ENCODE measurements at regions of chr3 and their contacts with region 1.

Region 1: GRCh38 chr3:140736863-140737460 is 59.1 kb downstream of the TRIM42 start:
- DNase-seq: peak; percentile 36
- H3K4me3 ChIP-seq: no peak overlapping the region
- H3K27ac ChIP-seq: no peak overlapping the region
- H3K4me1 ChIP-seq: no peaks in the 10 kb centered on the region
- H3K27me3 ChIP-seq: peaks cover 13% of the 10 kb centered on the region
- CTCF ChIP-seq: peak; percentile 47 to 64

Region 2: DNA sequence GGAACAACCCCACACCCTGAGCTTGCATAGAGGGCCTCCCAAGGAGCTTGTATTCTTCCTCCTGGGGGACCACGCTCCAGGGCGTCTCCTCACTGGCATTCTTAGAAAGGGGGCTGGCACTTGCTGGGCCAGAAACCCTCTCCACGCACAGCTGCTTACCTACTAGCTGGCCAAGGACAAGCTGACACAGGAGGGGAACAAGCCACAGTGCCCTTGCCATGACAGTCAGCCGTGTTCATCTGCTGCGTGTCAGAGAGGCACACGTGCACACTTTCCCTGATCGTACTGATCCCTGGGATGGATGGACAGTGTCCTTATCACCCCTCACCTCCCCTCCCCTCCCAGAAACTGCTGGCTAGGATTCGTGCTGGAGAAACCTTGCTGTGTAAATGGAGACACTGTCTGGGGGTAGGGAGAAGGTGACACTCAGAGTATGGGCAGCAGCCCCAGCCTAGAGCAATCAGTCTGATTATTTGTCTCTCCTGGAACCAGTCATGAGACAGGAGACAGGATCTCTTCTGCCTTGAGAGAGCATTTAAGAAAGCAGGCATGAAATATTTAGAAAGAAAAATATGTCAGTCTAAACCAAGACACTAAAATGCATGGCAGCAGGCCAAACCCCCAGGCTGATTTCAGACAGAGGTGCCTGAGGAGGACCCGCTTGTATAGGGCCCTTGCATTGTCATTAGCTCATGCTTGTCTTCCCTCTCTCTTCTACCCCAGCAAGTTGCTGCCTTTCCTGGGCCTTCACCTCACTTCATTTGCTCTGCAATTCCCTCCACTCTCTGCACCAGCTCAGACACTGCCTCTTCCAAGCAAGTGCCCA is 370.9 kb before region 1 on chr3:
- CTCF ChIA-PET with region 1: no interaction called
- dilution Hi-C with region 1: no loop called
- in situ Hi-C with region 1: no loop called
- intact Hi-C with region 1: loop called (anchors 5 kb)
- DNase-seq: no peak
- H3K4me3 ChIP-seq: no peak overlapping the region
- H3K27ac ChIP-seq: no peak overlapping the region
- H3K4me1 ChIP-seq: no peaks in the 10 kb centered on the region
- H3K27me3 ChIP-seq: no peaks in the 10 kb centered on the region
- CTCF ChIP-seq: no peak

Region 3: DNA sequence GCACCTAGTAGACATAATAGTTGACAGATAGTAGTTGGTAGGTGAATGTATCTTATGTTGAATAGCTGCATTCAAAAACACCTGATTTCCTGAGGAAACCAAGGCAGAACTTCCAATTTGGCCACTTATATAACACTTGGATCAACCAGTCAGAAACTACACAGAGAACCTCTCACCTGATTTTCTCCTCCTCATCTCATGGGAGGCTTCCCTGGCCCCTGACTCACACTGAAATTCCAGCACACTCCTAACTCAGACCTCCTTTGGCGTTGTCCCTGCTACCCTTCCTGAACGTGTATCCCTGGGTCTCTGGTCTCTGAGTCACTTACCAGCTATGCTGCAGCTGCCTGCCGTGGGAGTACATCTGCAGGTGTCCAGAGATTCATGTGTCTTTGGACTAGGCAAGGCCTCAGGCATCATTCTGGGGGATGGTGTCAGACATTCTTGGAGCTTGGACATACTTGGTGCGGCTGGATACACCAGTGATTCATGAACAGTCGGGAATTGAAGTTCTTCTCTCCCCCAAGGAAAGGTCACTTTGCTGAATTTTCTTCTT is 207.9 kb before region 1 on chr3:
- CTCF ChIA-PET with region 1: no interaction called
- dilution Hi-C with region 1: no loop called
- in situ Hi-C with region 1: no loop called
- intact Hi-C with region 1: no loop called
- DNase-seq: peak; percentile 99
- H3K4me3 ChIP-seq: no peak overlapping the region
- H3K27ac ChIP-seq: peak overlapping the region; percentile 68
- H3K4me1 ChIP-seq: peaks cover 34% of the 10 kb centered on the region
- H3K27me3 ChIP-seq: no peaks in the 10 kb centered on the region
- CTCF ChIP-seq: no peak

Region 4: GRCh38 chr3:140552898-140553297 is 184.1 kb before region 1 on chr3:
- CTCF ChIA-PET with region 1: no interaction called
- dilution Hi-C with region 1: no loop called
- in situ Hi-C with region 1: no loop called
- intact Hi-C with region 1: loop called (anchors 1 kb)
- DNase-seq: peak; percentile 65
- H3K4me3 ChIP-seq: no peak overlapping the region
- H3K27ac ChIP-seq: no peak overlapping the region
- H3K4me1 ChIP-seq: no peaks in the 10 kb centered on the region
- H3K27me3 ChIP-seq: no peaks in the 10 kb centered on the region
- CTCF ChIP-seq: peak in 1 of 2 donors; percentile 13

Region 5: GRCh38 chr3:140629357-140630139 is 107.4 kb before region 1 on chr3:
- CTCF ChIA-PET with region 1: no interaction called
- dilution Hi-C with region 1: no loop called
- in situ Hi-C with region 1: no loop called
- intact Hi-C with region 1: no loop called
- DNase-seq: peak; percentile 91
- H3K4me3 ChIP-seq: no peak overlapping the region
- H3K27ac ChIP-seq: peak overlapping the region; percentile 21
- H3K4me1 ChIP-seq: peaks cover 32% of the 10 kb centered on the region
- H3K27me3 ChIP-seq: no peaks in the 10 kb centered on the region
- CTCF ChIP-seq: no peak

Measured in mammary epithelial cell (primary cell).